Activated B cell treated with CpG ODN at 0.5 μM for 24 hours (primary cell): ENCODE measurements at regions of chr3 and their contacts with region 1.

Region 1: DNA sequence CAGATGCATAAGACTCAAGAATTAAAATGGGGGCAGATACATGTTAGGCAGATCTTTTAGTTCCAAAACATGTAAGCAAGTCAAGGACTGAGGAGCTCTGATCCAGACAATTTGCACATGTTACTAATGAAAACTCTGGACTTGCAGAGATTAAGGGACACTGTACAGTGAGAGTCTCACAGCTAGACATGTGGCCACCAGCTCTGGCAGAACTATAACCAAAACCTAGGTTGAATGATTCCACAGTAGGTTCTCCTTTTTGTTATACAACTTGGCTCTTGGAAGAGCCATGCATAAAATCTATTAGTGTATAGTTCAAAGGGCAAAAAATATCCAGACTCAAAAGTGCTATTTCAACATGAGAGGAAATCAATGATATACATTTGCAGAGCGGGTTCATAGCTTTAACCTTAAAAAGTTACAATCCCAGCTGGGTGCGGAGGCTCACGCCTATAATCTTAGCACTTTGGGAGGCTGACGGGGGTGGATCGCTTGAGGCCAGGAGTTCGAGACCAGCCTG is 61.8 kb downstream of the SETD2 start:
- DNase-seq: no peak
- ATAC-seq: no peak
- H3K4me3 Mint-ChIP-seq: no peak overlapping the region
- H3K27ac Mint-ChIP-seq: no peak overlapping the region
- H3K4me1 Mint-ChIP-seq: no peaks in the 10 kb centered on the region
- H3K27me3 Mint-ChIP-seq: no peaks in the 10 kb centered on the region
- CTCF ChIP-seq: no peak

Region 2: GRCh38 chr3:47291158-47291753 is 189.1 kb after region 1 on chr3:
- CTCF ChIA-PET with region 1: no interaction called
- POLR2A ChIA-PET with region 1: interaction called, 10 read pairs
- intact Hi-C with region 1: no loop called
- DNase-seq: no peak
- ATAC-seq: no peak
- H3K4me3 Mint-ChIP-seq: peak overlapping the region; percentile 72
- H3K27ac Mint-ChIP-seq: peak overlapping the region; percentile 90
- H3K4me1 Mint-ChIP-seq: peaks cover 80% of the 10 kb centered on the region
- H3K27me3 Mint-ChIP-seq: no peaks in the 10 kb centered on the region
- CTCF ChIP-seq: no peak

Region 3: GRCh38 chr3:47491186-47491585 is 389.0 kb after region 1 on chr3:
- CTCF ChIA-PET with region 1: no interaction called
- POLR2A ChIA-PET with region 1: no interaction called
- intact Hi-C with region 1: no loop called
- DNase-seq: no peak
- ATAC-seq: peak; percentile 28
- H3K4me3 Mint-ChIP-seq: peak overlapping the region; percentile 15
- H3K27ac Mint-ChIP-seq: peak overlapping the region; percentile 66
- H3K4me1 Mint-ChIP-seq: peaks cover 34% of the 10 kb centered on the region
- H3K27me3 Mint-ChIP-seq: no peaks in the 10 kb centered on the region
- CTCF ChIP-seq: no peak